ENCODE measurements at regions of chr11 and their contacts with region 1.

Region 1: DNA sequence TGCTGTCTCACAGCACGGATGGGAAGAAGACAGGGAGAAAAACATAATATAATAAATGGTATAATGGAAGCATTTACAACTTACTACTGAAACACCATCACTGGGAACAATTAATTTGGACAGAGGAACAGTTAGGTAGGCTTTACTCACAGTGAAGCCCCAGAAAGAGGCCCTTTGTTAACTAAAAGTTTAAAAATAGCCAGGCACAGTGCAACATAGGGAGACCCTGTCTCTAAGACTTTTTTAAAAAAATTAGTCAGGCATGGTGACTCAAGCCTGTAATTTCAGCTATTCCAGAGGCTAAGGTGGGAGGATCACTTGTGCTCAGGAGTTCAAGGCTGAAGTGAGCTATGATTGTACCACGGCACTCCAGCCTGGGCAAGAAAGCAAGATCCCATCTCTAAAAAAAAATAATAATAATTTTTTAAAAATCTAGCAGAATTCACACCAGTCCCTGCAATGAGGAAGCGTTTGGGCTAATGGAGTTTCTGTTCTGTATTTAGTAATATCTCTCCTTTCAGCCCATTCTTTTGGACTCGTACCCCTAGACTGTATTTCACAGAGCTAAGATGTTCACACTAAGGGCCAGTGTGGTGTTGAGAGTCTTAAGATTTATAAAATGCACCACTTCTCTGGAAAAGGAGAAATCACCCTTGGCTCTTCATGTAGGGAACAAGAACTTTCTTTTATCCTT is 275.5 kb downstream of the SOX6 start:
- DNase-seq: no peak
- H3K4me3 ChIP-seq: no peak overlapping the region
- H3K27me3 ChIP-seq: no peaks in the 10 kb centered on the region
- CTCF ChIP-seq: no peak

Region 2: DNA sequence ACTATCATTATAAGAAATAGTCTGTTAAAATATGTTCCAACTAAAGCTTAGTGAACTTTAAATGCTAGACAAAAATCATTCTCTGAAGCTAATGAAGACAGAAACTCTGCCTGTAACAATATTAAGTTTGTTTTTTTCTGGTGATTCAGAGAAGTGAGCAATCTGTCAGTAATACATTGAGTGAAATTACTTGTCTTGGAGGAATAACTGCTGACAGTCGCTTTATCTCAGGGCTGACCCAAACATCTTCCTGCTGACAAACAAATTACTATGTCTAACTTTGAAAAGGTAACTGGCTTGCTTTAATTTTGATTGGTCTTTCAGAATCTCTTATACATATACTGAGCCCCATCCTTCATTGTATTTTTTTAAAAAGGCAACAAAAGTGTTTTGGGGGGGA is 11.0 kb after region 1 on chr11:
- CTCF ChIA-PET with region 1: no interaction called
- POLR2A ChIA-PET with region 1: no interaction called
- DNase-seq: no peak
- H3K4me3 ChIP-seq: no peak overlapping the region
- H3K27me3 ChIP-seq: no peaks in the 10 kb centered on the region
- CTCF ChIP-seq: no peak

Region 3: GRCh38 chr11:16252373-16252772 is 171.5 kb after region 1 on chr11:
- CTCF ChIA-PET with region 1: no interaction called
- POLR2A ChIA-PET with region 1: interaction called, 11 read pairs
- DNase-seq: no peak
- H3K4me3 ChIP-seq: no peak overlapping the region
- H3K27me3 ChIP-seq: no peaks in the 10 kb centered on the region
- CTCF ChIP-seq: peak; percentile 42

Region 4: GRCh38 chr11:16526947-16527346 is 446.1 kb after region 1 on chr11:
- CTCF ChIA-PET with region 1: no interaction called
- POLR2A ChIA-PET with region 1: no interaction called
- DNase-seq: no peak
- H3K4me3 ChIP-seq: no peak overlapping the region
- H3K27me3 ChIP-seq: no peaks in the 10 kb centered on the region
- CTCF ChIP-seq: no peak